Mammary epithelial cell (primary cell): ENCODE measurements at regions of chr12 and their contacts with region 1.

Region 1: GRCh38 chr12:553205-554000 is 93.7 kb downstream of the B4GALNT3 start:
- DNase-seq: no peak
- H3K4me3 ChIP-seq: no peak overlapping the region
- H3K27ac ChIP-seq: no peak overlapping the region
- H3K4me1 ChIP-seq: no peaks in the 10 kb centered on the region
- H3K27me3 ChIP-seq: no peaks in the 10 kb centered on the region
- CTCF ChIP-seq: no peak

Region 2: DNA sequence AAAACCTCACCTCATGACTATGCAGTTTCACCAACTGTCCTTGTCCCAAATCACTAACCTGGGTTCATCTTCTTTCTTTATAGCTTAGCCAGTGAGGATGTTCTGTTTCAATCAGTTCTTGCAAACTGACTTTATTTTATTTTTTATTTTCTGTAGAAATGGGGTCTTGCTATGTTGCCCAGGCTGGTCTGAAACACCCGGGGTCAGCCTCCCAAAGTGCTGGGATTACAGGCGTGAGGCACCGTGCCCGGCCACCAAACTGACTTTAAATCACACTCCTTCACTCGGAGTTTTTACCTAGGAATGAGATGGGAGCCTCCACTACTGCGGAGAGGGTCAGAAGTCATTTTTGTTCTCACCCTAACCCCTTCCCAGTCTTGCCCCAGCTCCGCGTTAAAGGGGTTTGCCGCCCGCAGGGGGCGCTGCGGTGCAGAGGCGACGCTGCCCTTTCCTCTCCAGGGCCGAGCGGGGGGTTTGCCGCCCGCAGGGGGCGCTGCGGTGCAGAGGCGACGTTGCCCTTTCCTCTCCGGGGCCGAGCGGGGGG is 100.7 kb before region 1 on chr12:
- CTCF ChIA-PET with region 1: no interaction called
- dilution Hi-C with region 1: no loop called
- in situ Hi-C with region 1: loop called in 1 of 2 experiments (anchors 5 kb)
- intact Hi-C with region 1: no loop called
- DNase-seq: no peak
- H3K4me3 ChIP-seq: no peak overlapping the region
- H3K27ac ChIP-seq: no peak overlapping the region
- H3K4me1 ChIP-seq: no peaks in the 10 kb centered on the region
- H3K27me3 ChIP-seq: no peaks in the 10 kb centered on the region
- CTCF ChIP-seq: no peak

Region 3: DNA sequence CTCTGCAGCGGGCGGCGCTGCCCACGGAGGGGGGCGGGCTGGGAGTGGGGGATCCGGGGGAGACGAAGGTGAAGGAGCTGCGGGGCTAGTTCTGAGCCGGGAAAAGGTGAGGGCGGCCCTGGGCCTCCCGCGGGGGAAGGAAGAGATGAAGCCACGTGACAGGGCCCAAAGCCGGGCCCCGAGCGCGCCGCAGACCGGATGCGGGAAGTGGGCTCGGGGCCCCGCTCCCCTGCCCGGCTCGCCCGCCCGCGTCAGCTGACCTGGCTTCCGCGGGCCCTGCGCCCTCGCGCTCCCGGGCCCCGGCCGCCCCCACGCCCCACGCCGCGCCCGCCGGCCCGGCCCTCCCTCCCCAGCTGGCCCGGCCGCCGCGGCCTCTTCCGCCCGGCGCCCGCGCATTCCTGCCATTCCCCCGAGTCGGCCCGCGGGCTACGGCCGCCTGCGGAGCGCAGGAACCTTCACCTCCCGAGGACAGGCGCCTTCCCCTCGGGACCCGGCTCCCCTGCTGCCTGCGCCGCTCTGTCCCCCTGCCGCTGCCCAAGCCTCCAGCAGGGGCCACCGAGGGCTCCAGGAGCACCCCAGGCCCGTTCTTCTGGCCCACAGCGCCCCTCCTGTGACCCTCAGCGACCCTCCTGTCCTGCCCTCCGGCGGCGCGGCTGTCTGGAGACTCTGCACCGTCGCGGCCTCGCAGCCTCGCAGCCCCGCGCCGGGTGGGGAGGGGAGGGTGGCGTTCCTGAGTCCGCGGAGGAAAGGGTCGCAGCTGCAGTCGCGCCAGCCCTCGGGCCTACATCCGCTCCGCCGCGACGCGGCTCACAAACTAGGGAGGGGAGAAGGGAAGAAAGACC is 89.5 kb after region 1 on chr12:
- CTCF ChIA-PET with region 1: no interaction called
- dilution Hi-C with region 1: no loop called
- in situ Hi-C with region 1: no loop called
- intact Hi-C with region 1: no loop called
- DNase-seq: peak; percentile 29
- H3K4me3 ChIP-seq: peak overlapping the region in 2 of 3 experiments; percentile 37 to 39
- H3K27ac ChIP-seq: no peak overlapping the region
- H3K4me1 ChIP-seq: peaks cover 10% of the 10 kb centered on the region
- H3K27me3 ChIP-seq: no peaks in the 10 kb centered on the region
- CTCF ChIP-seq: peak in 1 of 2 donors; percentile 48

Region 4: GRCh38 chr12:1054117-1054870 is 500.9 kb after region 1 on chr12:
- CTCF ChIA-PET with region 1: no interaction called
- dilution Hi-C with region 1: no loop called
- in situ Hi-C with region 1: no loop called
- intact Hi-C with region 1: no loop called
- DNase-seq: no peak
- H3K4me3 ChIP-seq: no peak overlapping the region
- H3K27ac ChIP-seq: no peak overlapping the region
- H3K4me1 ChIP-seq: no peaks in the 10 kb centered on the region
- H3K27me3 ChIP-seq: no peaks in the 10 kb centered on the region
- CTCF ChIP-seq: no peak